Activated CD4-positive, alpha-beta T cell treated with anti-CD3 and anti-CD28 coated beads, Interleukin-2, amount 10 ng/mL, durations not matched to agents 7 days and 5 days (primary cell): ENCODE measurements at regions of chr17 and their contacts with region 1.

Region 1: DNA sequence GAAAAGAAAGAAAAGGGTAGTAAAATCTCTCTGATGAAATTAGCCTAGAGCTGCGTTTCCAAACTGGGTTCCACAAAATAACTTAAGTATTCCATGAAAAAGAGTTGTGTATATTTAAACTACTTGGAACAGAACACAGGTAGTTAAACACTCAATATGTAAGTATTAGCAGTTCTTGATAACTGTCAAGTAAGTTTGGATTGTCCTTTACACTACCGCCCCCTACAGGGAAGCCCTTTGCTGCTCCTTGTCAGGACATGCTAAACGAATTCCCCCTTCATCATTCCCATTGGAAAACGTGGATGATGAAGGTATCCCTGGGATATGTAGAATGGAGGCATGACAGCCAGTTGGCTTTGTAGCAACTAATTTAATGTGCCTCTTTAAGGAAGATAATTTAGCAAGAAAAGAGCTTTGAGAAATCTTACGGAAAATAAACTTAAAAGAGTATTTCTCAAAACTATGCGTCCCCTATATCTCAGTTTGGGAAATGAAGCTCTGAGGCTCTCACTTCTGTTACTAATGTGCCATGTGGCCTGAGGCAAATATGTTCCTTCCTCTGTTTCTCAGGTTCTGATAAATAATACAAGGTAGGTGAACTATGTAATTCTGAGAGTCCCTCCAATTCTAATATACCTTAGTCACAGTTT is 18.8 kb downstream of the NCBP3 start:
- DNase-seq: peak; percentile 81
- H3K4me3 Mint-ChIP-seq: no peak overlapping the region
- H3K27ac Mint-ChIP-seq: no peak overlapping the region
- H3K4me1 Mint-ChIP-seq: peaks cover 5% of the 10 kb centered on the region
- H3K27me3 Mint-ChIP-seq: no peaks in the 10 kb centered on the region

Region 2: GRCh38 chr17:3804503-3804931 is 22.7 kb before region 1 on chr17:
- CTCF ChIA-PET with region 1: interaction called, 19 read pairs
- POLR2A ChIA-PET with region 1: no interaction called
- DNase-seq: no peak
- H3K4me3 Mint-ChIP-seq: no peak overlapping the region
- H3K27ac Mint-ChIP-seq: peak overlapping the region; percentile 9
- H3K4me1 Mint-ChIP-seq: peaks cover 15% of the 10 kb centered on the region
- H3K27me3 Mint-ChIP-seq: no peaks in the 10 kb centered on the region